Motor neuron (in vitro differentiated cells): ENCODE measurements at regions of chr1 and their contacts with region 1.

Region 1: GRCh38 chr1:23539698-23540266 is 8.7 kb upstream of the E2F2 start:
- ATAC-seq: peak; percentile 84 to 96 (median 94)
- H3K4me3 ChIP-seq: peak overlapping the region in 1 of 5 donors; percentile 6
- H3K27ac ChIP-seq: peak overlapping the region in 1 of 2 donors; percentile 30
- H3K4me1 ChIP-seq: peaks cover under 1 to 5% of the 10 kb centered on the region in 2 donors

Region 2: GRCh38 chr1:23422241-23423030 is 117.3 kb before region 1 on chr1:
- in situ Hi-C with region 1: no loop called
- ATAC-seq: peak in 6 of 8 experiments; percentile 4 to 71 (median 34)
- H3K4me3 ChIP-seq: no peak overlapping the region
- H3K27ac ChIP-seq: no peak overlapping the region
- H3K4me1 ChIP-seq: peaks cover 15 to 20% of the 10 kb centered on the region in 2 donors

Region 3: GRCh38 chr1:23643736-23644554 is 104.2 kb after region 1 on chr1:
- in situ Hi-C with region 1: loop called in 5 of 9 experiments (anchors 5 to 10 kb)
- ATAC-seq: no peak
- H3K4me3 ChIP-seq: no peak overlapping the region
- H3K27ac ChIP-seq: no peak overlapping the region
- H3K4me1 ChIP-seq: no peaks in the 10 kb centered on the region